ENCODE measurements at regions of chr18 and their contacts with region 1.

Region 1: GRCh38 chr18:7980136-7980535 is 413.0 kb downstream of the PTPRM start:
- DNase-seq: peak; percentile 5
- ATAC-seq: no peak
- H3K4me3 ChIP-seq: no peak overlapping the region
- H3K27ac ChIP-seq: no peak overlapping the region
- H3K4me1 ChIP-seq: no peaks in the 10 kb centered on the region
- H3K27me3 ChIP-seq: no peaks in the 10 kb centered on the region
- CTCF ChIP-seq: no peak
- EP300 ChIP-seq: no peak
- POLR2A ChIP-seq: no peak
- RAD21 ChIP-seq: no peak

Region 2: DNA sequence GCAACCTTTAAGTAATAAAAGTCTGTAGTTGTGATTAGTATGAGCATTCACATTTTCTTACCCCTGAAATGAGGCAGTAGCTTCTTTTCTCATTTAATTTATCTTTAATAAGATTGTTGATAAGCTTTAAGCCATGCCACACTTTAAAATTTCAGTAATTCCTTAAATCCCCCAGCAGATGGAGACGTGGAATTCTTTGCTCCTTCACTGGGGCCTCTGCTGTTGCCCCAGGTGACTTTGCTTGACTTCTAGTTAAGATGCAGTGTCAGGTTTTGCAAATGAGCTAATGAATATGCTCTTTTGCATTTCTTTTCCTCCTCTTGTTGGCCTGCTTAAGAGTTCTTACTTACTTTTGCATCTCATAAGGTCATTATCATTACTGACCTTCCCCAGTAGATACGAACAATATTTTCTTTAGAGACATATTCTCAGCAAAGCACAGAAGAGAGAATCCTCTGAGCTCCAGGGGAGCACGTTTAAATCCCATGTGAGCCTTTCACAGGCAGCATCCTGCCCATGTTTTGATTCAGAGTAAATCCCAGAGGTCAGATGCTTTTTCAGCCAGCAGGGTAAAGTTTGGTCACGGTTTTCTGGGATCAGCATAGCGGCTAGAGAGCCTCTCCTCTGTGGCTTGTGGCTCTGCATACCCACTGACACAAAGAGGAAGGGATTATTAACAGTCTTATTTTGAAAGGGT is 190.1 kb before region 1 on chr18:
- CTCF ChIA-PET with region 1: no interaction called
- POLR2A ChIA-PET with region 1: no interaction called
- in situ Hi-C with region 1: no loop called
- intact Hi-C with region 1: loop called (anchors 10 kb)
- DNase-seq: peak; percentile 31
- ATAC-seq: peak; percentile 68
- H3K4me3 ChIP-seq: no peak overlapping the region
- H3K27ac ChIP-seq: no peak overlapping the region
- H3K4me1 ChIP-seq: peaks cover 12% of the 10 kb centered on the region
- H3K27me3 ChIP-seq: no peaks in the 10 kb centered on the region
- CTCF ChIP-seq: peak; percentile 60
- EP300 ChIP-seq: no peak
- POLR2A ChIP-seq: no peak
- RAD21 ChIP-seq: no peak